Motor neuron (in vitro differentiated cells): ENCODE measurements at regions of chr4 and their contacts with region 1.

Region 1: GRCh38 chr4:72302981-72303704 is 265.9 kb downstream of the ADAMTS3 start:
- ATAC-seq: peak; percentile 53 to 89 (median 69)
- H3K4me3 ChIP-seq: no peak overlapping the region
- H3K27ac ChIP-seq: no peak overlapping the region
- H3K4me1 ChIP-seq: no peaks in the 10 kb centered on the region

Region 2: GRCh38 chr4:73036123-73036522 is 733.0 kb after region 1 on chr4:
- in situ Hi-C with region 1: loop called in 2 of 9 experiments (anchors 25 kb)
- ATAC-seq: no peak
- H3K4me3 ChIP-seq: no peak overlapping the region
- H3K27ac ChIP-seq: no peak overlapping the region
- H3K4me1 ChIP-seq: no peaks in the 10 kb centered on the region